ENCODE measurements at regions of chr3 and their contacts with region 1.

Region 1: DNA sequence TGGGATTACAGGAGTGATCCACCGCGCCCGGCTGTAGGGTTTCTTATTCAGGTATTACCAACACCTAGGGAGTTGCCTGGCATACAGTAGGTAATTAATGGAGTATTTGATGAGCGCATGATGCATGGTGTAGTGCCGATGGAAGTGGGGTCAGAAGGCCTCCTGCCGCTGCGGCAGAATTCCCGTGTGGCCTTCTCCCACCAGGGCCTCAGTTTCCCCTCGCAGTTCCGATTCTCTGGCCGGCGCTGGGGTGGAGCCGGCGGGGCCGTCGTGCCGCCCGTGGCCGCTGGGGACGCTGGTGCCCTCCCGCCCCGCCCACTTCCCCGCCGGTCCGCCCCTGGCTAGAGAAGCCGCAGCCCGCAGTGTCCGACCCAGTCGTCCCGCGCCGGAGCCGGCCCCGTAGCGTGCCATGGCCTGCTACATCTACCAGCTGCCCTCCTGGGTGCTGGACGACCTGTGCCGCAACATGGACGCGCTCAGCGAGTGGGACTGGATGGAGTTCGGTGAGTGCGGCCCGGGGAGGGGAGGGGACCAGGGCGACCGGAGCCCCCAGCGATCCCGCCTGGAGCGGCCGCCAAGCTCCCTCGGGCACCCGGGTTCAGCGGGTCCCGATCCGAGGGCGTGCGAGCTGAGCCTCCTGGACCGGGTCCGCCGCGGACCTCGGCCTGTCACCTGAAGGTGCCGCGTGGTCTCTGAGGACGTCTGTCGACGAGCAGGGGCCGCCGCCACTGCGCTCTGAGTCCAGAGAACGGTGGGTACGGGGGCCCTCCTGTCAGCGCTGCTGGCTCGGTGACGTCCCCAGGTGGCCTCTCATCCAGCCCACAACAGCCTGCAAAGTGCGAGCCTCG is at the start of gene IRAK2:
- DNase-seq: no peak
- ATAC-seq: peak; percentile 92
- H3K4me3 ChIP-seq: peak within 1 kb of the TSS; percentile 66 to 80
- H3K27ac ChIP-seq: peak within 1 kb of the TSS; percentile 85; the same call in 1 of the 2 replicates
- H3K4me1 ChIP-seq: peaks cover 11% of the 10 kb centered on the region
- H3K27me3 ChIP-seq: no peaks in the 10 kb centered on the region
- CTCF ChIP-seq: peak; percentile 92
- total RNA-seq, gene IRAK2: 25.1 TPM

Region 2: GRCh38 chr3:10149226-10149625 is 15.5 kb before region 1 on chr3:
- CTCF ChIA-PET with region 1: interaction called, 10 read pairs
- POLR2A ChIA-PET with region 1: no interaction called
- in situ Hi-C with region 1: no loop called
- intact Hi-C with region 1: no loop called
- DNase-seq: no peak
- ATAC-seq: no peak
- H3K4me3 ChIP-seq: no peak overlapping the region
- H3K27ac ChIP-seq: no peak overlapping the region
- H3K4me1 ChIP-seq: no peaks in the 10 kb centered on the region
- H3K27me3 ChIP-seq: no peaks in the 10 kb centered on the region
- CTCF ChIP-seq: no peak

Region 3: GRCh38 chr3:10198761-10199649 is 34.2 kb after region 1 on chr3:
- CTCF ChIA-PET with region 1: no interaction called
- POLR2A ChIA-PET with region 1: interaction called, 10 read pairs
- in situ Hi-C with region 1: no loop called
- intact Hi-C with region 1: no loop called
- DNase-seq: no peak
- ATAC-seq: peak; percentile 57
- H3K4me3 ChIP-seq: no peak overlapping the region
- H3K27ac ChIP-seq: peak overlapping the region; percentile 91
- H3K4me1 ChIP-seq: peaks cover 68% of the 10 kb centered on the region
- H3K27me3 ChIP-seq: no peaks in the 10 kb centered on the region
- CTCF ChIP-seq: no peak

Region 4: DNA sequence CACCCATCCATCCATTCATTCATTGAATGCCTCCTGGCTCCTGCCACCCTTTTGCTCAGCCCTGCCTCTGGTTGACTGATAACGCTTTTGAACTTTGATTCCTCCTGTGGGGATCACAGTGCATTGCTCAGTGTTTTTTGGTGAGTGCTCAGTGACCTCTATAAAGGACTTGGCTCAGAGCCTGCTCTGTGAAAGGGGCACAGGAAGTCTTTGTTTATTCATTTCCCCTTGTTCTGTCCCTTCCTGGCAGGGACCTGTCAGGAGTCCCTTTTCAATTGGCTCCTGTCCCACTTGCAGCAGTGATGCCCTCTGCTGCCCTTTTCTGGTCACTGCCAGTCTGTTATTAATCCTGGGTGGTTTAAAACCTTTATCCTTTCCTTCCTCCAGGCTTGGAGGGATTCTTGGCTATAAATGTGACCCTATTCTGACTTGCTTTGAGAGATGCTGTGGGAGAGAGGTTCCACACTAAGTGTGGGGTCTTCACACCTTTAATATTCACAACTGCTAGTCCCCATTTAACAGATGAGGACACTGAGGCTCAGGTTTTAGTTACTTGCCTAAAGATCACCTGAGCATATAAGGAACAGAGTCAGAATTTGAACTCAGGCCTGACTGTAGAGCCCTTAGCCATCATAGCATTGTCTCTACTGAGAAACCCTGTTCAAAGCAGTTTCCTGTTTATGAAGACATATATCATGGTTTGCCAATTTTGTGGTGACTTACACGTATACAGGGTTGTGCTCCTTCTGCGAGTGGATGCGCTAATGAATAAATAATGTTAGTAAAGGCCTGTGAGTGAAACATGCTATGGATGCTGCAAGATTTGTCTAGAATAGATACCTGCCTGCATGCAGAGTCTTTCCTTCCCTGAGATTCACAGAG is 60.3 kb after region 1 on chr3:
- CTCF ChIA-PET with region 1: interaction called, 10 read pairs
- POLR2A ChIA-PET with region 1: no interaction called
- in situ Hi-C with region 1: no loop called
- intact Hi-C with region 1: no loop called
- DNase-seq: peak; percentile 60
- ATAC-seq: peak; percentile 78
- H3K4me3 ChIP-seq: no peak overlapping the region
- H3K27ac ChIP-seq: no peak overlapping the region
- H3K4me1 ChIP-seq: peaks cover 3% of the 10 kb centered on the region
- H3K27me3 ChIP-seq: no peaks in the 10 kb centered on the region
- CTCF ChIP-seq: peak; percentile 77; the same call in 1 of the 2 replicates

Region 5: DNA sequence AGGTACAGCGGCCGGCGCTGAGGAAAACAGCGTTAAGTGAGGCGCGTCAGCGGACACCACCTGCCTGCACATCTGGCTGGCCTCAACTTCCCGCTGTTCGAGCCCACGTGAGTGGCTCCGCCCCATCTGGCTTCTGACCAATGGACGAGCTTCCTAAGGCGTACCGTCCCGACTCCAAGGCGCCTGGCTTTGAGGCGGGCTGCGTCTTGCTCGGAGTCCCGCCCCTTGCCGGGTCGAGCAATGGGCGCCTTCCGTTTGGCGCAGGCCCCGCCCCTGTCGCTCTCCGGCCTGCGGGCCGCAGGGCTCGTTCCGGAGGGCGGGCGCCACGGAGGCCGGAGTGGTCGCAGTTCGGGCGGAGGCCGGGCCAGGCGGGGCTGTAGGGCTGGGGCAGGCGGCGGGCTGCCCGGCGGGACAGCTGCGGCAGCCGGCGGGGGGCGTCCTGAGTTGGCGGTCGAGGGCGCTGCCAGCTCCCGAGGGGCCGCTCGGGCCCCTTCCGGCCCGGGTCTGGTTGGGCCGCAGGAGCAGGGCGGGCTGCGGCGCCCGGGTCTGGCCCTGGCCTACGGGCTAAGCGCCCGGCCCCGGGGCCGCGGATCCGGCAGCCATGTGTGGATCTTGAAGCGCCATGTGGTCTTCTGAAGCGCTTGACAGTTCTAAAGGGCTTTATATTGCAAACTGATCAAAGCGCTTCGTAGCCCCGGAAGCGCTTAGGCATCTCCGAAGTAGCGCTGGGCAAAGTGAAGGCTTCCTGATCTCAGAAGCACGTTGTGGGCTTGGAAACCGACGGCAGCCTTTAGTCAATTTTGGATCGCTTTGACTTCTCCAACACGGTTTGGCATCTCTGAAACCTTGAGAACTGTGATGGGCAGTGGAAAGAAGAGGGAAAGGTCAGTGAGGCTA is 83.7 kb after region 1 on chr3 and contains the start of gene TATDN2:
- CTCF ChIA-PET with region 1: no interaction called
- POLR2A ChIA-PET with region 1: no interaction called
- in situ Hi-C with region 1: loop called (anchors 10 kb)
- intact Hi-C with region 1: no loop called
- DNase-seq: peak; percentile 77
- ATAC-seq: peak; percentile 98
- H3K4me3 ChIP-seq: peak within 1 kb of the TSS; percentile 88
- H3K27ac ChIP-seq: peak within 1 kb of the TSS; percentile 85
- H3K4me1 ChIP-seq: peaks cover 4% of the 10 kb centered on the region
- H3K27me3 ChIP-seq: no peaks in the 10 kb centered on the region
- CTCF ChIP-seq: no peak
- total RNA-seq, gene TATDN2: 30.4 TPM

Measured in Panc1 (cell line).